ENCODE measurements at regions of chr1 and their contacts with region 1.

Region 1: DNA sequence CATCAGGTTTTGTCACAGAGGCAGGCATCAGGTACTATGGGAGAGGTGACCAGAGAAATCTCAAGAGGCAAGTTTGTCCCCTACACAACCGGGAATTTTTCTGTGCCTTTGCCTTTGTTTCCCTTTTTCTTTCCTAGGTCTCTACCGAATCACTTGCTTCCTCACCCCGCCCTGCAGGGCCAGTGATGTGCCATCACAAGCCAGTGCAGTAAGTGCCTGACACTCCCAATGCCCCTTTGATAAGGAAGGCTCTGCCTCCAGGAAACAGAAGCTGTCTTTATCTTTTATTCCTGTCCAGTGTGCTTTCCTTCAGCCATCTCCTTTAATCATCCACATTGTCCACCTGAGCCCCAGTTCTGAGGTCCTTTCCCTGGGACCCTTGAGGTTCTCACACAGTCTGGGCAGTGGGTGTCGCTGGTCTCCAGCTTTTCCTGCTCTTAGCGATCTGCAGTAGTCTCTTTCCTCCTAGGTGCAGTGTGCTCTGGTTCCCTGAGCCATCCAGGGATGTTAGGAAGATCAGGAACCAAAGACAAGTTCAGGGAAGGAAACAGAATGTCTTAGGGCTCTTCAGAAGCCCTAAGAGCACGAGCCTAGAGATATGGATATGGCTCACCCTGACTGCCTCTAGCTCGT is 36.6 kb downstream of the GJA5 start:
- DNase-seq: peak; percentile 39
- H3K4me3 ChIP-seq: no peak overlapping the region
- H3K27ac ChIP-seq: no peak overlapping the region
- H3K4me1 ChIP-seq: no peaks in the 10 kb centered on the region
- H3K27me3 ChIP-seq: peaks cover 11% of the 10 kb centered on the region
- CTCF ChIP-seq: peak; percentile 58

Region 2: DNA sequence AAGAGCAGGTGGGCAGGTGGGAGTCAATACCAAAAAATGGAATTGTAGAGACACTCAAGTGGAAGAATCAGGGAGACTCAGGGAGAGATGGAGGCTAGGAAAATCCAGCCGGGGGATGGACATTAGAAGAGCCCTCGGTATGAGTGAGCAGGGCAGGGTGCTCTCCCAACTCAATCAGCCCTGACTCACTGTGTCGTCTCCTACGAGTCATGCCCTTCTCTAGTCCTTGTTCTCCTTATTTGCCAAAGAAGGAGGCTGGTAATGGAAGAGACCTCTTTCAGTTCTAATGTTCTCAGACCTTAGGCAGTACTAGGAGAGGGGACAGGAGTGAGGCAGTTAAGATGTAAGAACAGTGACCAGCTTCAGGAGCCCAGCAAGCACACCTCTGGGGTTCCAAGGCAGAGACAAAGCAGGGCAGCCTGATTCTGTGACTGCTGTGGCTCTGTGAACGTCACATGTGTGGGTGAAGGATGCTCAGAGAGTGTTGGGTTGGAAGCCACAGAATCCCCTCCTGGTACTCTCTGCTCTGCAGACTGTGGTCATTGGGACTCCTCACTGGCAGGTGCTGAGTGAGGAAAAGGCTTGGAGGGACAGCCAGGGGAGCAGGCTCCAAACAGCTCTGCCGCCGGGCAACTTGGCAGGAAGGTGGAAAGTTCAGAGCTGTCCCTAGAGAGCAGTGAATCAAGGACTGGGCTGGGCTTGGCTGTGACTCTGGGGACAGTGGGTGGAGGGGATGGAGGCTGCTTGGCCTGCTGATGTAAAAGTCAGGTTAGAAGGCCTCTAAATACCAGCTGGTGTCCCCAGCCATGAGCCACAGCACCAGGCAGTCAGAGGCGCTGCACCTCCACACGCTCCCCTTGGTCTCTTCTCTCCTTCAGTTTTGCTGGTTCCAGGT is 47.7 kb after region 1 on chr1:
- CTCF ChIA-PET with region 1: no interaction called
- POLR2A ChIA-PET with region 1: no interaction called
- intact Hi-C with region 1: loop called (anchors 5 kb)
- DNase-seq: no peak
- H3K4me3 ChIP-seq: no peak overlapping the region
- H3K27ac ChIP-seq: no peak overlapping the region
- H3K4me1 ChIP-seq: peaks cover 5% of the 10 kb centered on the region
- H3K27me3 ChIP-seq: no peaks in the 10 kb centered on the region
- CTCF ChIP-seq: no peak

Measured in A673 (cell line).